ENCODE measurements at regions of chr9 and their contacts with region 1.

Region 1: DNA sequence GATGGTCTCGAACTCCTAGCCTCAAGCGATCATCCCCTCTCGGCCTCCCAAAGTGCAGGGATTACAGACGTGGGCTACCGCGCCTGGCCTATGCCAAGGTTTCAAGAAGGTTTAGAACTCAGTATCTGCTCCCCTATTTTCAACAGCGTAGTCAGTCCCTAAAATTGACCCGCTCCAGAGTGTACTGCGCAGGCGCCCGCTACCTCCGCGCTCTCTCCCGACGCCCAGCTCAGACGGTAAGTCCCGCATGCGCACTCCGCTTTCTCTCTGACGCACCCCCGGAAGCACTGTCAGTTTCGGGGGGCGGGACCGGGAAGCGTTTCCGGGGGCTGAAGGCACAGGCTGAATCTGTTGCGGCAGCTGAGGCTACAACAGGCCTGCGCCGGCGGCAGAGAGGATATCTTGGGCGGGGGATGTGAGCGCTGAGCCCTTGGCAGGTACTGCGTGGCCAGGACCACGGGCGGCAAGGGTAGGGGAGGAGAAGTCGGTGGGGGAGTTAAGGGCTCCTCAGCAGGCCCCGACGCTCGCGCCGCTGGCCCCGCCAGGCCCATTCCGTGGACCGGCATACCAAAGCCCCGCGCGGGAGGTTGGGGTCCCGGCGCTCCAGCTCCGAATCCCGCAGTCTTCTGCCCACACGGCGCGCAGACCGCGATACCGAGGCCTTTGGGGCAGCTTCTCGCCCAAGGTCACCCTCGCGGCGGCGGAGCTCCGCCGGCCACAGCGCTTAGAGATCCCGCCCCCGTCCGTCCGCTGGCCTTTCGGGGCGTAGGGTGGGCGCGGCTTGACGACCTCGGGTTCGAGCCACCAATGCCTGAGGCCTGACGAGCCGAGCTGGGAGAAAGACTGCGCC is at the start of gene ZBTB43:
- DNase-seq: peak; percentile 98
- H3K4me3 Mint-ChIP-seq: peak within 1 kb of the TSS; percentile 92
- H3K27ac Mint-ChIP-seq: peak within 1 kb of the TSS; percentile 99
- H3K4me1 Mint-ChIP-seq: peaks cover 27% of the 10 kb centered on the region
- H3K27me3 Mint-ChIP-seq: peaks cover 2% of the 10 kb centered on the region
- total RNA-seq, gene ZBTB43: 11.6 and 21.2 TPM in 2 replicates

Region 2: GRCh38 chr9:125521462-125522327 is 1283.2 kb before region 1 on chr9:
- intact Hi-C with region 1: loop called (anchors 5 kb)
- DNase-seq: peak; percentile 38
- H3K4me3 Mint-ChIP-seq: peak overlapping the region; percentile 61
- H3K27ac Mint-ChIP-seq: peak overlapping the region; percentile 91
- H3K4me1 Mint-ChIP-seq: peaks cover 33% of the 10 kb centered on the region
- H3K27me3 Mint-ChIP-seq: no peaks in the 10 kb centered on the region

Region 3: GRCh38 chr9:126661521-126662220 is 143.2 kb before region 1 on chr9:
- intact Hi-C with region 1: no loop called
- DNase-seq: no peak
- H3K4me3 Mint-ChIP-seq: no peak overlapping the region
- H3K27ac Mint-ChIP-seq: no peak overlapping the region
- H3K4me1 Mint-ChIP-seq: no peaks in the 10 kb centered on the region
- H3K27me3 Mint-ChIP-seq: peaks cover 15% of the 10 kb centered on the region

Region 4: DNA sequence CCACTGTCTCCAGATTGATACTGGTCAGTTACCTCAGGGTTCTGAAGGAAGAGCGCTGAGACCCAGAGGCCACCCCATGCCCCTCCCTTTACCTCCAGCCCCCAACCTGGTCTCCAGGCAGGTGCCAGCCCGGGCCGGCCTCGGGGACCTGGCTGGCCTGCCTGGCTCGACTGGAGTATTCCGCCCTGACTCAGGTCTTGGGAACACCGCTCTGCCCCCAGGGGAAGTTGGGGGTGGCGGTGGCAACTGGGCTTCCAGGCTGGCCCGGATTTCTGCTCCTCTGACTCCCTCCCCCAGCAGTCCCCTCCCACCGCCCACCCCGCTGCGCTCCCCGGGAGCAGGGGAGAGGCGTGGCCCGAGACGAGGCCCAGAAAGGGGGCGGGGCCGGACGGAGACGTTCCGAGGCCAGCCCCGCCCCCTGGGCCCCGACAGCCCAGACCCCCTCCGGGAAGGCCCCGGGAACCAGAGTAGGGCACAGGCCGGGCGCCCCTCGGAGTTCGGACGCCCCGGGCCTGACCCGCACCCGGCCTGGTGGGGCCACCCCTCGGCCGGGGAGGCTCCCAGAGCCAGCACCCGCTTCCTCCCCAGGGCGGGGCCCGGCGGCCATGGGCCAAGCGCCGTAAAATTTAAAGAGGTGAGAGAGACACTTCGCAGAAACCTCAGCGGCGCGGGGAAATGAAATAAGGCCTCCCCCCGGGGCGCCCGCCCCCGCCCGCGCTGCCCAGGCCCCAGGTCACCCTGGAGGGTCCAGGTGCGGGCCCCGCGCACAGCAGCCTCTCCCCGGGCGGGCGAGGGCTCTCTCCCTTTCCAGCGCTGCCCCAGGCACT is 82.5 kb before region 1 on chr9:
- intact Hi-C with region 1: loop called (anchors 1 kb)
- DNase-seq: peak; percentile 80
- H3K4me3 Mint-ChIP-seq: peak overlapping the region; percentile 88
- H3K27ac Mint-ChIP-seq: peak overlapping the region; percentile 74
- H3K4me1 Mint-ChIP-seq: peaks cover 35% of the 10 kb centered on the region
- H3K27me3 Mint-ChIP-seq: peaks cover 10% of the 10 kb centered on the region

Region 5: DNA sequence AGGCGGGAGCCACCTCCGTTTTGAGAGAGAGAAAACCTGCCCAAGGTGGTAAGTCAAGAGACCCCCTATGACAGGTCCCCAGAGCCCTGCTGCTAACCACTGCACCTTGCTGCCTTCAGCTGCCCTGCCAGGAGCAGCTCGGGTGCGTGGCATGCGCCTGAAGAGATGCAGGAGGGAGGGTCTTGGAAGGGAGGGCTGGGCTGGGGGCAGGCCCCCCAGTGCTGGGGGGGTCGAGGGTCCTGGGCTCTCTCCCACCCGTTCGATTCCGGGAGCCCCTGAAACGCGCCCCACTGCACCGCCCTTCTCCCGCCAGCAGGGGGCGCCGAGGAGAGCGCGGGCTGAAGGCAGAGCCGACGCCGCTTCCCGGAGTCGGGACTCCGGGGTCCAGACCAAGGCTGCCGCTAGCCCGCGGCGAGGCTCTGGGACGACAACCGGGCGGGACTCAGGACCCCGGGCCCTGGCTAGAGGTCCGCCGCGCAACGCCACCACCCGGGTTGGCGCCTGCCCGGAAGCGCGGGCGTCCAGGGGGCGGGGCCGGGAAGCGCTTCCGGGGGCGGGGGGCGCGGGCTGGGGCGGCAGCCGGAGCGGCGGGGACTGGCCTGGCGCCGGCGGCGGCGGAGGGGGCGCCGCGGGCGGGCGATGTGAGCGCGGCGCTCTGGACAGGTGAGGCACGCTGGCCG is 55.3 kb after region 1 on chr9 and contains the start of gene ZBTB34:
- intact Hi-C with region 1: loop called (anchors 2 kb)
- DNase-seq: peak; percentile 74
- H3K4me3 Mint-ChIP-seq: peak within 1 kb of the TSS; percentile 89
- H3K27ac Mint-ChIP-seq: peak within 1 kb of the TSS; percentile 84
- H3K4me1 Mint-ChIP-seq: peaks cover 24% of the 10 kb centered on the region
- H3K27me3 Mint-ChIP-seq: peaks cover 12% of the 10 kb centered on the region
- total RNA-seq, gene ZBTB34: 7.5 and 8.5 TPM in 2 replicates

Region 6: DNA sequence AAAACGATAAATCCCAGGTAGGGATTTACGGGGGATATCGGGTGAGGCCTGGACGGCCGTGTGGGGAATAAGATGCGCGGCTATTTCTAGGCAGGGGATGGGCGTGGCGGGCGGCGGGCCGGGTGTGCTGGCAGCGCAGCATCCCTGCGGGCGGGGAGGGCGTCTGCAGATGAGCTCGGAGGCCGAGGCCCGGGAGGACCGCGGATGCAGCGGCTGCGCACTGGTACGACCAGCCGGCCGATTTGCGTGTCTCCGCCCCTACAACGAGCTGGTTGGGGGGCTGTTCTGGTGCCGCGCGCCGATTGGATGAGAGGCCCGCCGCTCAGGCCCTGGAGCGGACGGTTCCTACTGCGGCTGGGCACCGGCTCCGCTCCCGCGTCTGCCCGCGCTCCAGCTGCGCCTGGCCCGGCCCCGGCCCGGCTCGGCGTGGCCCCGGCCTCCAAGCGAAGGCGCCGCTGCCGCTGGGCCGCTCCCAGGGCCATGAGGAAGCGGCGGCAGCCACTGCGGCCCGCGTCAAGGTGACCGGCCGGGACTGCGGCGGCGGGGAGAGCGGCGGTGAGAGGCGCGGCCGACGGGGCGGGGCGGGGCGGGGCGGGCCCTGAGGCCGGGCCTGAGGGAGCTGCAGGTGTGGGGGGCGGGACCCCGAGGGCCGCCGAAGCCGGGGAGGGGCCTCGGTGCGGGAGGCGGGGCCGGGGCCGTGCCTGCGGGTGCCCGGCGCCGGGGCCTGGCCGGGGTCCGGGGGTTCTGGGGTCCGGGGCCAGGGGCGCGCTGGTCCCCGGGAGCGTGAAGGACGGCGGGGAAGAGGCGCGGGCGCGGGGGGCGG is 109.7 kb after region 1 on chr9 and contains the start of gene RALGPS1:
- intact Hi-C with region 1: loop called (anchors 1 kb)
- DNase-seq: peak; percentile 91
- H3K4me3 Mint-ChIP-seq: peak within 1 kb of the TSS; percentile 73
- H3K27ac Mint-ChIP-seq: no peak within 1 kb of the TSS
- H3K4me1 Mint-ChIP-seq: peaks cover 6% of the 10 kb centered on the region
- H3K27me3 Mint-ChIP-seq: peaks cover 17% of the 10 kb centered on the region
- total RNA-seq, gene RALGPS1: 1.4 and 1.8 TPM in 2 replicates